Heart left ventricle (tissue), 16 donors: ENCODE measurements at regions of chr20 and their contacts with region 1.

Region 1: GRCh38 chr20:57346477-57346876 is 4.6 kb upstream of the RAE1 start:
- DNase-seq: peak; percentile 47 to 76 (median 65)
- ATAC-seq: peak; percentile 44 to 56 (median 50)
- H3K4me3 ChIP-seq: no peak overlapping the region
- H3K27ac ChIP-seq: no peak overlapping the region
- H3K4me1 ChIP-seq: peaks cover 0 to 4% (median 0%) of the 10 kb centered on the region in 12 donors
- H3K27me3 ChIP-seq: peaks cover 0 to 8% (median 0%) of the 10 kb centered on the region in 9 donors
- CTCF ChIP-seq: peak; percentile 56 to 82 (median 72)
- POLR2A ChIP-seq: no peak

Region 2: GRCh38 chr20:56540420-56540819 is 806.1 kb before region 1 on chr20:
- intact Hi-C with region 1: loop called in 1 of 10 experiments (anchors 10 kb)
- DNase-seq: no peak
- ATAC-seq: no peak
- H3K4me3 ChIP-seq: no peak overlapping the region
- H3K27ac ChIP-seq: no peak overlapping the region
- H3K4me1 ChIP-seq: no peaks in the 10 kb centered on the region
- H3K27me3 ChIP-seq: no peaks in the 10 kb centered on the region
- CTCF ChIP-seq: no peak
- POLR2A ChIP-seq: no peak